Naive thymus-derived CD4-positive, alpha-beta T cell (primary cell): ENCODE measurements at regions of chr5 and their contacts with region 1.

Region 1: GRCh38 chr5:101045689-101046088 is 142.6 kb upstream of the ST8SIA4 start:
- DNase-seq: peak in 5 of 9 donors; percentile 4 to 20 (median 8)
- ATAC-seq: no peak
- H3K4me3 ChIP-seq: no peak overlapping the region
- H3K4me3 Mint-ChIP-seq: no peak overlapping the region
- H3K27ac ChIP-seq: no peak overlapping the region
- H3K27ac Mint-ChIP-seq: no peak overlapping the region
- H3K4me1 ChIP-seq: no peaks in the 10 kb centered on the region
- H3K4me1 Mint-ChIP-seq: peaks cover 0 to 10% (median 9%) of the 10 kb centered on the region in 7 donors
- H3K27me3 ChIP-seq: no peaks in the 10 kb centered on the region
- H3K27me3 Mint-ChIP-seq: peaks cover 0 to 2% (median 0%) of the 10 kb centered on the region in 5 donors

Region 2: DNA sequence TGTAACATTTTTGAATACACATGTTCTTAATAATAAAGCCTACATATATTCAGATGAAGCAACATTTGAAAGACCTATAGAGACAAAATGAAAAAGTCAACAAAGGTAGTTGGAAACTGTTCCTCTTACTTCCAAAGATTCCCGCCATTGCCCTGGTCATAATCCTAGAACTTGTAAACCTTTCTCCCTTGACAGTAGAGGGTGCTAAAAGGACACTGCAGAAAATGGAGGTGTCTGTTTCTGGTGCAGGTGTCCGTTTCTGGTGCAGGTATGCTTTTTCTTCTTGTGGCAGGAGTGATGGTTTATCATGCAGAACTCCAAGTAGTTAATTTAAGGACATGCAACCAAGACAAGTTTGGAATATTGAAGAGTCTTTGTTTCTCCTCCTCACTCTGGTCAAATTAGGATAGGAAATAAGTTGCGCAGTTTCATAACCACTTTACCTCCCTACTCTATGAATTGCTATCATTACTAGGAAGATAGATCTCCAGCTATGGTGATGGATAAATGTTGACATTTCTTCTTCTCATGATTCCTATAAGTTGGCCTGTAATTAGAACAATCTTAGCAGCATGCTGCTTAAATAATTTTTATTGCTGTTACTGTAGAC is 566.5 kb before region 1 on chr5:
- CTCF ChIA-PET with region 1: no interaction called
- POLR2A ChIA-PET with region 1: no interaction called
- intact Hi-C with region 1: loop called (anchors 1 to 2 kb)
- DNase-seq: peak in 6 of 9 donors; percentile 7 to 36 (median 14)
- ATAC-seq: no peak
- H3K4me3 ChIP-seq: no peak overlapping the region
- H3K4me3 Mint-ChIP-seq: no peak overlapping the region
- H3K27ac ChIP-seq: no peak overlapping the region
- H3K27ac Mint-ChIP-seq: no peak overlapping the region
- H3K4me1 ChIP-seq: no peaks in the 10 kb centered on the region
- H3K4me1 Mint-ChIP-seq: no peaks in the 10 kb centered on the region
- H3K27me3 ChIP-seq: no peaks in the 10 kb centered on the region
- H3K27me3 Mint-ChIP-seq: no peaks in the 10 kb centered on the region

Region 3: GRCh38 chr5:100697970-100698369 is 347.7 kb before region 1 on chr5:
- CTCF ChIA-PET with region 1: no interaction called
- POLR2A ChIA-PET with region 1: no interaction called
- intact Hi-C with region 1: loop called in 1 of 2 experiments (anchors 10 kb)
- DNase-seq: no peak
- ATAC-seq: no peak
- H3K4me3 ChIP-seq: no peak overlapping the region
- H3K4me3 Mint-ChIP-seq: no peak overlapping the region
- H3K27ac ChIP-seq: no peak overlapping the region
- H3K27ac Mint-ChIP-seq: no peak overlapping the region
- H3K4me1 ChIP-seq: no peaks in the 10 kb centered on the region
- H3K4me1 Mint-ChIP-seq: peaks cover 0 to 7% (median 0%) of the 10 kb centered on the region in 7 donors
- H3K27me3 ChIP-seq: no peaks in the 10 kb centered on the region
- H3K27me3 Mint-ChIP-seq: peaks cover 0 to 10% (median 0%) of the 10 kb centered on the region in 5 donors